ENCODE measurements at regions of chr6 and their contacts with region 1.

Region 1: DNA sequence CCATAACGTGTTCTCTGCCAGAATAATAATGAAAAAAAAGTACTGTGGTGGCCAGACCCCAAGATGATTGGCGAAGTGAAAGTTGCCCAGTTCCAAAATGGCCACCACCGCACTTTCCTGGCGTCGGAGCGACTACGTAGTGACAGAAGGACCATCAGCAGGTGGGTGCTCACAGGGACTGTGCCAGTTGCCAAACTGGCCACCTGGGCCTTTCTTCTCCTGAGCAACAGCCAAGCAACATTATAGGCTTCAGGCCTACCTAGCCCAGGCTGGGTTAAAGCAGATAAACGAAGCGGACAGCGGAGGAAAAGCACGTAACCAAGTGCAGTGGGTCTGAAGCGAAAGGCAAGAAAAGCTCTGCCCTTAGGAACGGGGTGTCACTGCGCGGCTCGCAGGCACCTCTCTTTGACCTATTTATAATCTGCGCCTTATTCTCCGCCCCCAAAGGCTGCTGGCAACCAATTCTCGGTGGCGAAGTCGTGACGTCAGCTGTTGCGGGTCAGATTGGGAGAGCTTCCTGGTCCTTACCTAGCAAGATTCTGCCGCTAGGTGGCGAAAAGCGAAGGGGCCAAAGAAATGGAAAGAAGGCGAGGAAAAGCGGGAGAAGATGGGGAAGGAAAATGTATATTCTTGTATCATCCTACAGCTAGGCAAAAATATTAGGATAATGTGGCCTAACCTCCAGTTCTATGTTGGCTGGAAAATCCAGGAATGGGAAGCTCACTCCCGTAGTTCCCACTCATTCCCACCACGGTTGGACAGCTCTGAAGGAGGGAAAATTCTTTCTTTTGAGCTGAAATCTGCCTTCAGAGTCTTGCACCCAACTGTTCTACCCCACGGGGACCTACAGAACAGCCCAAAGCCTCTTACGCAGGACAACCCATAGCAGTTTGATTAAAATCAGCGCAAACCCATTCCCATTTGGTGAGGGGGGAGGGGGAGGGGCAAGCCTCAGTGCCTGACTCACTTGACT is 6.9 kb upstream of the MOG start:
- DNase-seq: peak; percentile 99
- ATAC-seq: peak; percentile 99
- H3K4me3 Mint-ChIP-seq: peak overlapping the region; percentile 89
- H3K27ac Mint-ChIP-seq: peak overlapping the region; percentile 98
- H3K4me1 Mint-ChIP-seq: peaks cover 14% of the 10 kb centered on the region
- H3K27me3 Mint-ChIP-seq: peaks cover 3% of the 10 kb centered on the region

Region 2: GRCh38 chr6:29399525-29399924 is 250.5 kb before region 1 on chr6:
- CTCF ChIA-PET with region 1: no interaction called
- POLR2A ChIA-PET with region 1: no interaction called
- DNase-seq: no peak
- ATAC-seq: no peak
- H3K4me3 Mint-ChIP-seq: no peak overlapping the region
- H3K27ac Mint-ChIP-seq: no peak overlapping the region
- H3K4me1 Mint-ChIP-seq: no peaks in the 10 kb centered on the region
- H3K27me3 Mint-ChIP-seq: peaks cover 23% of the 10 kb centered on the region

Region 3: DNA sequence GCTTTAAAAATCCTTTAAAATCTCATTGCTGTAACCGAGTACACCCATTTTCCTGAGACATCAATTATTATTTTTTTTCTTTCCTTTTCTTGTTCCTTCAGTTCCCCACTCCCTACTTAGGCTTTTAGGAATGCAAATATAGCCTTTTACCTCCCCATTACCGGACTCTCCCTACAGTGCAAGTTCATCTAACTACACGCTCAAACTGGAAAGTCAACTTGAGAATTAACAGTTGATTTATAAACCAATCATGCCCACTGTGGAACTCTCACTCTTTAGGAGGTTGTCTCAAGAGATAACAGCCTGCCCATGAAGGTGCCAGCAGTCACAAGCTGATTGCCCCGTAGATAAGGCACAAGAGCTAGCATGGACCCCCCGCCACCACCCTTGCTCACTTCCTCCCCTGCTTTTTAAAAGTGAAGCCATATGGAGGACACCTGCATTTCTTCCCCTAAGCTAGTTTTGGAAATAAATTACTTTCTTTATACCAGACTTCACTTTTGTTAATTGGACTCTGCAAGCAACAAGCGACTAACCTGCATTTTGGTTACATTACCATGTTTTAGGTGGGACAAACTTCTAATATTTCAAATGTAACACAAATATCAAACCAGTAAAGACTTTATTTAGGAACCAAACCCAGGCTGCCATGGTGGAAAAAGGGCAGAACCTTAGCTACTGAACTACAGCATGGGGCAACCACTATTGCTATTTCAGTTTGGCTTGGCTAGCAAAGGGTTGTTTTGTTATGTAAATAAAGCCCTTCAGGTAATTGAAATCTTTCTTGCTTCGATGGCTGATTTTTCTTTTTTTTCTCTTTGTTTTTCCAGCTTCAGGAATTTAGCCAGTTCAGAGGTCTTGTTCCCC is 125.3 kb before region 1 on chr6:
- CTCF ChIA-PET with region 1: no interaction called
- POLR2A ChIA-PET with region 1: no interaction called
- DNase-seq: no peak
- ATAC-seq: no peak
- H3K4me3 Mint-ChIP-seq: no peak overlapping the region
- H3K27ac Mint-ChIP-seq: no peak overlapping the region
- H3K4me1 Mint-ChIP-seq: no peaks in the 10 kb centered on the region
- H3K27me3 Mint-ChIP-seq: peaks cover 33% of the 10 kb centered on the region

Region 4: GRCh38 chr6:29632789-29633533 is 17.0 kb before region 1 on chr6 and contains the start of gene GABBR1:
- CTCF ChIA-PET with region 1: interaction called, 22 read pairs
- POLR2A ChIA-PET with region 1: interaction called, 6 read pairs
- DNase-seq: peak; percentile 67
- ATAC-seq: peak; percentile 85
- H3K4me3 Mint-ChIP-seq: peak within 1 kb of the TSS; percentile 73
- H3K27ac Mint-ChIP-seq: peak within 1 kb of the TSS; percentile 1
- H3K4me1 Mint-ChIP-seq: peaks cover 36% of the 10 kb centered on the region
- H3K27me3 Mint-ChIP-seq: peaks cover 54% of the 10 kb centered on the region
- total RNA-seq, gene GABBR1: 3.2 to 3.7 TPM

Region 5: DNA sequence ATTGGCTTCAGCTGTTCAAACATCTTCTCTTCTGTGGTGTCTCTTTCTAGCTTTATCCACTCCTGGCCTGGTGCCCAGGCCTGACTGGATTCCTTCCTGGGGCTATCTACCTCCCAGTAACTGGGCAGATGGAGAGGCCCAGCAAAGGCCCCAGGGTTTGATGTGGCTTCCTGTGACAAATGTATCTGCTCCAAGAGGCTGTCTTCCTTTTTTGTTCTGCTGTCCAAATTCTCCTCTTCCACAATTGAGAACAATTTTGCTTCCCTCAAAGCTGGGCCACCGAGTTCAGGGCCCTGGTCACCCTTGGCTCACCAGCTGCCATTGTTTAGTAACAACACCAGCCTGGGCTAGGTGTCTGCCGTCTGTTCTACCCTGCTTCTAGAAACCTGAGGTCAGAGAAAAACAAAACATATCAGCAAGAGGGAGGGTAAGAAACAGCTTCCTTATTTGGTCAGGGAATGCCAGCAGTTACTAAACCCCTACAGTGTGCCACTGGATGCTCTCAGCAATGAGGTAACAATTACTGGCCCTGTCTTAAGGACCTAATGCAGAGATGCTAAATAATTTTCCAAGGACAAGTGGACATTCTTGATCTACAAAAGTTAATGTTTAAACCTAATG is 27.1 kb after region 1 on chr6:
- CTCF ChIA-PET with region 1: interaction called, 69 read pairs
- POLR2A ChIA-PET with region 1: no interaction called
- DNase-seq: no peak
- ATAC-seq: no peak
- H3K4me3 Mint-ChIP-seq: no peak overlapping the region
- H3K27ac Mint-ChIP-seq: no peak overlapping the region
- H3K4me1 Mint-ChIP-seq: peaks cover 10% of the 10 kb centered on the region
- H3K27me3 Mint-ChIP-seq: peaks cover 9% of the 10 kb centered on the region

Region 6: GRCh38 chr6:29696155-29697125 is 46.5 kb after region 1 on chr6:
- CTCF ChIA-PET with region 1: interaction called, 22 read pairs
- POLR2A ChIA-PET with region 1: no interaction called
- DNase-seq: no peak
- ATAC-seq: no peak
- H3K4me3 Mint-ChIP-seq: no peak overlapping the region
- H3K27ac Mint-ChIP-seq: no peak overlapping the region
- H3K4me1 Mint-ChIP-seq: no peaks in the 10 kb centered on the region
- H3K27me3 Mint-ChIP-seq: peaks cover 18% of the 10 kb centered on the region

Region 7: GRCh38 chr6:29737707-29738630 is 88.0 kb after region 1 on chr6:
- CTCF ChIA-PET with region 1: interaction called, 10 read pairs
- POLR2A ChIA-PET with region 1: interaction called, 4 read pairs
- DNase-seq: peak; percentile 80
- ATAC-seq: peak; percentile 90
- H3K4me3 Mint-ChIP-seq: no peak overlapping the region
- H3K27ac Mint-ChIP-seq: no peak overlapping the region
- H3K4me1 Mint-ChIP-seq: peaks cover 18% of the 10 kb centered on the region
- H3K27me3 Mint-ChIP-seq: no peaks in the 10 kb centered on the region

Region 8: GRCh38 chr6:29763491-29764289 is 113.7 kb after region 1 on chr6:
- CTCF ChIA-PET with region 1: interaction called, 11 read pairs
- POLR2A ChIA-PET with region 1: no interaction called
- DNase-seq: peak; percentile 22
- ATAC-seq: no peak
- H3K4me3 Mint-ChIP-seq: no peak overlapping the region
- H3K27ac Mint-ChIP-seq: no peak overlapping the region
- H3K4me1 Mint-ChIP-seq: peaks cover 21% of the 10 kb centered on the region
- H3K27me3 Mint-ChIP-seq: peaks cover 13% of the 10 kb centered on the region

Region 9: DNA sequence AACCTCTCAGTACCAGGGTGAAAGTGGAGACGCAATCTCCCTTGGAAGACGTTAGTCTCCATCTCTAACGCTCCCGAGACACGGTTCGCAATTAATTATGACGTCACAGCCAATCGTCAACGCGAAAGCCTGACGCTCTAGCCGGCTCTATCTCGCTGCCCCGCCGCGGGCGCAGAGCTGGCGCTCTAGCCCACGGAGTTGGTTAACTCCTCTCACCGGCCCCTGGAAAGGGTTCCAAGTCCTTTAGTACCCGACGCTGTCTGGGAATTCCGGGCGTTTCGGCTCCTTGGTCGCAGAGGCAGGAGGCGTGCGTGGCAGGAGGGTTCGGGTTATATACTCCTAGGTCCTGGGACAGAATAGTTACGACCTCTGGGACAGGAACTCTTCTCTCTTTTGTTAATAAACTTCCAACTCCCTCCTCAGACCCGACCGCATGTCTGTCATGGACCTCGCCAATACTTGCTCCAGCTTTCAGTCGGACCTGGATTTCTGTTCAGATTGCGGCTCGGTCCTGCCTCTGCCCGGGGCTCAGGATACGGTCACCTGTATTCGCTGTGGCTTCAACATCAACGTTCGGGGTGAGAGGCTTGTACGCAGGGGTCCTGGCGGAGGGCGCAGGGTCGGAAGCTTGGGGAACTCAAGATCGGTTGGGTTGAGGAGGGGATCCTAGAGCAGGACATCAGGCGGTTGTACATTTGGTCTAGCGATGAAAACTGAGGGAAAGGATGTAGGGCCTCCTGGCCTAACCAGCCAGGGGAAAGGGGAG is 411.3 kb after region 1 on chr6 and contains the start of gene POLR1H:
- CTCF ChIA-PET with region 1: interaction called, 10 read pairs
- POLR2A ChIA-PET with region 1: no interaction called
- DNase-seq: peak; percentile 93
- ATAC-seq: peak; percentile 93
- H3K4me3 Mint-ChIP-seq: peak within 1 kb of the TSS; percentile 98
- H3K27ac Mint-ChIP-seq: peak within 1 kb of the TSS; percentile 99
- H3K4me1 Mint-ChIP-seq: peaks cover 48% of the 10 kb centered on the region
- H3K27me3 Mint-ChIP-seq: no peaks in the 10 kb centered on the region
- total RNA-seq, gene POLR1H: 52.3 to 60.4 TPM